BJ (cell line): ENCODE measurements at regions of chr9 and their contacts with region 1.

Region 1: GRCh38 chr9:109440797-109441287 is 57.3 kb downstream of the PTPN3 start:
- DNase-seq: peak; percentile 26
- H3K4me3 ChIP-seq: no peak overlapping the region
- H3K27me3 ChIP-seq: no peaks in the 10 kb centered on the region
- CTCF ChIP-seq: peak; percentile 87

Region 2: GRCh38 chr9:109426626-109427402 is 14.0 kb before region 1 on chr9:
- CTCF ChIA-PET with region 1: interaction called, 20 read pairs
- POLR2A ChIA-PET with region 1: no interaction called
- DNase-seq: no peak
- H3K4me3 ChIP-seq: no peak overlapping the region
- H3K27me3 ChIP-seq: no peaks in the 10 kb centered on the region
- CTCF ChIP-seq: no peak

Region 3: GRCh38 chr9:109453210-109453842 is 12.5 kb after region 1 on chr9:
- CTCF ChIA-PET with region 1: interaction called, 33 read pairs
- POLR2A ChIA-PET with region 1: no interaction called
- DNase-seq: peak; percentile 32
- H3K4me3 ChIP-seq: no peak overlapping the region
- H3K27me3 ChIP-seq: no peaks in the 10 kb centered on the region; the same call in 1 of the 2 replicates
- CTCF ChIP-seq: no peak

Region 4: DNA sequence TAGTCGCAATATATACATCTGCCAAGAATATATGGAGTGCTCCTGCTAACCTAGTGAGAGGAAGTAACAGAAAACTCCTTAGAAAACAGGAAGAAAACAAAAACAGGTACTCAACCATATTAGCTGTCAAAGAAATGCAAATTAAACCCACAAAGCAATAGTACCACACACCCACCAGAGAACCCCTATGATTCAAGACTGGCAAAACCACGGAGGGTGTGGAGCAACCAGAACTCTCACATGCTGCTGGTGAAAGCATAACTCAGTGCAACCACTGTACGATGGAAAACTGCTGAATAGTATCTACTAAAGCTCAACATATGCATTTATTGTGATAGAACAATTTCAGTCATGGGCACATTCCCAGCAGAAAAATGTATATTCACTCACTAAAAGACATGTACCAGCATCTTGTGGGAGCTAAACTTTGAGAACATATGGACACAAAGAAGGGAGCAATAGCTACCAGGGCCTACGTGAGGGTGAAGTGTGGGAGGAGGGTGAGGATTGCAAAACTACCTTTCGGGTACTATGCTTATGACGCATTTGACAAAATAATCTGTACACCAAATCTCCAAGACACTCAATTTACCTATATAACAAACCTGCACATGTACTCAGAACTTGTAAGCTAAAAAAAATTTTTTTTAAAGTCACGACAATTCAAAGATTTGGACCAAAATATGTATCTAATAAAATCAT is 23.2 kb after region 1 on chr9:
- CTCF ChIA-PET with region 1: interaction called, 120 read pairs
- POLR2A ChIA-PET with region 1: no interaction called
- DNase-seq: no peak
- H3K4me3 ChIP-seq: no peak overlapping the region
- H3K27me3 ChIP-seq: no peaks in the 10 kb centered on the region
- CTCF ChIP-seq: no peak

Region 5: DNA sequence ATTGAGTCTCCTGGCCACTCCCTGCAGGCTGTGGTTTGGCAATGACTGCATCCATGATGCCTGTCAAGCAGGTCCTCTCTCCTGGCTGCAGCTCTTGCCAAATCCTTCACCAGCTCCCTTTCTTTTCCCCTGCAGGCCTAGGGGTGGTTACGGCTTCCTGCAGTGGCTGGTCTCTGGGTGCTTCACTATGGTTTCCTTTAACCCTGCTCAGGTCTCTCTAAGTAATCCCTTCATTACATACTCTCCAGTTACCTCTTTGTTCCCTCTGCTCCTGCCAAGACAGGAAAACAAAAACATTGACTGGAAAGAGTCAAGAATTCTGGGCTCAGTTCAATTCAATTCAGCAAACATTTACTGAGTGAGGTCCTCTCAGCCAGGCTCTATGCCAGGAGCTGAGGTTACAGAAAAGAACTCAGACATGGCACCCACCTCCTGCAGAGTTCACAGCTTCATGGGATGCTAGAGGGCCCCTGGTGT is 77.1 kb after region 1 on chr9:
- CTCF ChIA-PET with region 1: interaction called, 13 read pairs
- POLR2A ChIA-PET with region 1: no interaction called
- DNase-seq: no peak
- H3K4me3 ChIP-seq: no peak overlapping the region
- H3K27me3 ChIP-seq: peaks cover 11% of the 10 kb centered on the region
- CTCF ChIP-seq: no peak

Region 6: GRCh38 chr9:109652964-109653363 is 212.1 kb after region 1 on chr9:
- CTCF ChIA-PET with region 1: no interaction called
- POLR2A ChIA-PET with region 1: no interaction called
- DNase-seq: no peak
- H3K4me3 ChIP-seq: no peak overlapping the region
- H3K27me3 ChIP-seq: peaks cover 3% of the 10 kb centered on the region
- CTCF ChIP-seq: peak; percentile 55